ENCODE measurements at regions of chr10 and their contacts with region 1.

Region 1: DNA sequence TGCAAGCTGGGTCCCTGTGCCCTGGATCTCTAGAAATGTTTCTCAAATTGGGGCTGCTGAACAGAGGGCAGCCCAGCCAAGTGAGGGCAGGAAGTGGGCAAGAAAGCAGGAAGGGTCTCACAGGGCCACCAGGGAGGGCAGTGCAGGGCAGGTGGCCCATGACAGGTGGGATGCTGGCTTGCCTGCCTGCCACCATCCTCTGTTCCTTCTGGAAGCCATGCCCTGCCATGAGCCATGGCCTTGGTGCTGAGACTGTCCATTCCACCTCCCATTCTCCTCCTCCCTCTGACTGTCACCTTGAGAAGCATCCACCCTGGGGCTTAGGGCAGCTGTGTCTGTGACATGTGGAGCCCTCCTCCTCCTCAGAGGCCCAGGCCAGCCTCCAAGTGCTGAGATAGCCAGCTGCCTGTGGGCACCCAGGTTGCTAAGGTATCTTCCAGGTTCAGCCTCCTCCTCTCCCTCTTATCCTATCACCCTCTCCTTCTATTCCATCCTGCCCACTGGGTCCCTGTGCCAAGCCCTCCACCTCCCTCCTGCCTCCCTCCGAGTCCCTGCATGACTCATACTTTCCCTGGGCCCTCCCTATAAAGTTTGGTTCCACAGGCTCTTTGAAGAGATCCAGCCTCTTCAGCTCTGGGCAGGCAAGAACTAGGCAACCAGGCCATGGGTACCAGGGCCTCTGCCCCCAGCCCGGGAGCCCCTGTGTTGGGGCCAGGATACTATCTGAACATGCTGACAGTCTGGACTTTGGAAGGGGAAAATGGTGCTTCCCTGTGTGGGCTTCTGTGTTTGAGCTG is 1.3 kb downstream of the VSIR start:
- DNase-seq: no peak
- CTCF ChIP-seq: no peak

Region 2: DNA sequence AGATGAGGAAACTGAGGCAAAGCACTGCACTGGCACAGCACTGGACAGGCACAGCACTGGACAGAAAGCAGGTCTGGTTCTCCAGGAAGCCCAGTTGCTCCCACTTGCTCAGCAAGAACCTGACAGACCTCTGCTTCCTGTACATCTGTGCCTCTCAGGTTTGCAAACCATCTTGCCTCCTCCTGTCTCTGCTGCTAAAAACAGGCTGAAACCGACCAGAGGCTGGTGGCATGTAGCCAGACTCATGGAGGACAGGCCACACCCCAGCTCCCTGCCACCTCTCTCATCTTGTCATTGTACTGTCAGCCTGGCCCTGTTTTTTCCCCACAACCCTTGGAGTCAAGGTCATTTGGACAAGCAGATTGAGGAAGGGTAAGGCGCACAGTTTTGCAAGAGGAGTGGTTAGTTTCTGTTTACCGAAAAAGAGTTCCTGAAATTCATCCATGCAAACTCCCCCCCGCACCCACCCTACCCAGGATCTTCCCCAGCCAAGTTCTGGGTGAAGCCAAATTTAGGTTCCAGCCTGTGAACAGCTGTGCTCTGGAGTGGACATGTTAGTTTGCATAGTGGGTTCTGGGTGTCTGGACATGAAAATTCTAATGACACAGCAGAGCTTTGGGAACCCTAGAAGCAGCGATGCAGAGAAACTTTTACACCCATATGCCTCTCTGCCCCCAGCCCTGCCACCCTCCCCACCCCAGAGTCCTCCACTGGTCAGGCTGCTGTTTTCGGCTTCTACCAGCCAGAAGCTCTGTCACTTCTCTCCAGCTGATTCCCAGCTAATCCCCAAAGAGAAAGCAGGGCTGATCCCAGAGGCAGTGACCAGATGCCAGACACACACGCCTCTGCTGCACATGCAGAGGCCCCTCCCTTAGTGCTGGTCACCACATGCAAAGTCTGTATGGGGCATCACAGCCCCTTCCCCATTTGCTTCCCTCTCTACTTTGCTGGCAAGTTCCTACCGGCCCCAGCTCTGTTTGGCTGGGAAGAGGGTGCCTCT is 44.0 kb before region 1 on chr10:
- CTCF ChIA-PET with region 1: interaction called, 29 read pairs
- POLR2A ChIA-PET with region 1: no interaction called
- DNase-seq: peak; percentile 77
- CTCF ChIP-seq: no peak

Region 3: GRCh38 chr10:71748671-71749191 is 23.3 kb before region 1 on chr10:
- CTCF ChIA-PET with region 1: interaction called, 24 read pairs
- POLR2A ChIA-PET with region 1: no interaction called
- DNase-seq: peak; percentile 65
- CTCF ChIP-seq: no peak

Region 4: GRCh38 chr10:71756311-71757191 is 15.5 kb before region 1 on chr10:
- CTCF ChIA-PET with region 1: interaction called, 21 read pairs
- POLR2A ChIA-PET with region 1: interaction called, 3 read pairs
- DNase-seq: no peak
- CTCF ChIP-seq: no peak

Region 5: GRCh38 chr10:71782917-71783490 is 11.0 kb after region 1 on chr10:
- CTCF ChIA-PET with region 1: interaction called, 61 read pairs
- POLR2A ChIA-PET with region 1: no interaction called
- DNase-seq: no peak
- CTCF ChIP-seq: no peak

Region 6: DNA sequence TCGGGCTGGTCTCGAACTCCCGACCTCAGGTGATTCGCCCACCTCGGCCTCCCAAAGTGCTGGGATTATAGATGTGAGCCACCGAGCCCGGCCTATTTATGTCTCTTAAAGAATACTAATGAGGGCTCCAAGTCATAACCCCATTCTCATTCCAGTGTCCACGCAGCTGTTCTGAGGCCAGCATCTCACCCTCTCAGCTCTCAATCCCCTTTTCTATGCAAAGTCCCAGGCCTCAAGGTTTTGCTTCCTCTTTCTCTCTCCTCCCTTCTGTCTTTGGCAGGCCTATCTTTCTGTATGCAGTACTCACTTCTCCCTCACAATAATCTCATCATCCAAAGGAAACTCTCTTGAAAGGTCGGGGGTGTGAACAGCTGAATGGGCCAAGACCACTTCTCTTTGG is 29.3 kb after region 1 on chr10:
- CTCF ChIA-PET with region 1: interaction called, 11 read pairs
- POLR2A ChIA-PET with region 1: no interaction called
- DNase-seq: peak; percentile 79
- CTCF ChIP-seq: no peak

Measured in GM10248 (cell line).